ENCODE measurements at regions of chr12 and their contacts with region 1.

Region 1: DNA sequence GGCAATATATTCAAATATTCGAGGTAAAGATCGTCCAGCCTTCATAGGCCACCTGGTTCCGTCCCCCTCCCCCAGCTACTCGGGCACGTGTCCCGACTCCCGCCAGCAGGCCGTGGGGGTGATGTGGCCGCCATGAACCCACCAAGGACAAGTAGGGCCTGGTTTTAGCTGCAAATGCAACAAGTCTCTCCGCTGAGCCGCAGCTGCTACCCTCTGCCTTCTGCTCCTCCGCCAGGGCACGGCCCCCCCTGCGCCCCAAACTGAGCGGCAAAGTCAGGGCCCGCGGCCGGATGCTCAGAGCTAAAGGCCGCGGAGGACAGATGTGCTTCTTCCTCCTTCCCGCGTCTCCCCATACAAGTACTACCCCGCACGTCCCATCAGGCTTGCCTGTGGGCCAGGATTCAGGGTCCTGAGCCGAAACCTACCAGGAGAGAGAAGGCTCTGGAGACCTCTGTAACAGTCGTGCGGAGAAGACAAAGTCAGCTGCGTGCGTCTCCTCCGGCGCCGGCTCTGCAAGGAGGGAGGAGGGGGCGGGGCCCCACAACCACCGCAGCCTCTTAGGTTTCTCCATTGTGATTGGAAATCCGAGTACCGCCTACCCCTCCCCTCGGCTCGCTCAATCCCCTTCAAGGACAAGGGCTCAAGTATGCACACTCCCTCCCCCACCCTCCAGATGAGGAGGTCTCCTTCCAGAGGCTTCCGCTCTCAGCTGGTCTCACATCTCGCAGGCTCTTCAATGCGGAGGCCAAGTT is at the start of gene LDHB:
- DNase-seq: peak; percentile 85
- ATAC-seq: peak; percentile 96
- H3K4me3 ChIP-seq: peak within 1 kb of the TSS; percentile 81 to 94 (median 88)
- H3K4me3 Mint-ChIP-seq: peak within 1 kb of the TSS; percentile 93
- H3K27ac ChIP-seq: peak within 1 kb of the TSS; percentile 61 to 68
- H3K27ac Mint-ChIP-seq: peak within 1 kb of the TSS; percentile 97
- H3K4me1 ChIP-seq: peaks cover 8 to 13% of the 10 kb centered on the region in 2 donors
- H3K4me1 Mint-ChIP-seq: peaks cover 30% of the 10 kb centered on the region
- H3K27me3 ChIP-seq: peaks cover 0 to 2% (median 0%) of the 10 kb centered on the region in 4 experiments
- H3K27me3 Mint-ChIP-seq: peaks cover 11% of the 10 kb centered on the region
- CTCF ChIP-seq: no peak
- total RNA-seq, gene LDHB: 161 and 163 TPM in 2 replicates

Region 2: GRCh38 chr12:21501379-21501956 is 156.0 kb before region 1 on chr12 and contains the starts of genes GOLT1B and RECQL:
- CTCF ChIA-PET with region 1: no interaction called
- POLR2A ChIA-PET with region 1: no interaction called
- intact Hi-C with region 1: loop called (anchors 1 kb)
- DNase-seq: peak; percentile 96
- ATAC-seq: peak; percentile 95
- H3K4me3 ChIP-seq: peak within 1 kb of the TSS; percentile 69 to 97 (median 92)
- H3K4me3 Mint-ChIP-seq: no peak within 1 kb of the TSS
- H3K27ac ChIP-seq: peak within 1 kb of the TSS; percentile 70 to 89
- H3K27ac Mint-ChIP-seq: no peak within 1 kb of the TSS
- H3K4me1 ChIP-seq: peaks cover 26 to 28% of the 10 kb centered on the region in 2 donors
- H3K4me1 Mint-ChIP-seq: peaks cover 37% of the 10 kb centered on the region
- H3K27me3 ChIP-seq: no peaks in the 10 kb centered on the region
- H3K27me3 Mint-ChIP-seq: no peaks in the 10 kb centered on the region
- CTCF ChIP-seq: no peak
- total RNA-seq, gene GOLT1B: 25.1 and 26.3 TPM in 2 replicates
- total RNA-seq, gene RECQL: 54.8 and 56.3 TPM in 2 replicates

Region 3: GRCh38 chr12:21527451-21528180 is 129.9 kb before region 1 on chr12:
- CTCF ChIA-PET with region 1: no interaction called
- POLR2A ChIA-PET with region 1: interaction called, 3 read pairs
- intact Hi-C with region 1: loop called (anchors 5 kb)
- DNase-seq: peak; percentile 78
- ATAC-seq: peak; percentile 98
- H3K4me3 ChIP-seq: peak overlapping the region; percentile 38 to 70 (median 61)
- H3K4me3 Mint-ChIP-seq: peak overlapping the region; percentile 82
- H3K27ac ChIP-seq: no peak overlapping the region
- H3K27ac Mint-ChIP-seq: peak overlapping the region; percentile 54
- H3K4me1 ChIP-seq: peaks cover 6 to 9% of the 10 kb centered on the region in 2 donors
- H3K4me1 Mint-ChIP-seq: peaks cover 12% of the 10 kb centered on the region
- H3K27me3 ChIP-seq: peaks cover 0 to 14% (median 9%) of the 10 kb centered on the region in 4 experiments
- H3K27me3 Mint-ChIP-seq: peaks cover 23% of the 10 kb centered on the region
- CTCF ChIP-seq: no peak

Region 4: DNA sequence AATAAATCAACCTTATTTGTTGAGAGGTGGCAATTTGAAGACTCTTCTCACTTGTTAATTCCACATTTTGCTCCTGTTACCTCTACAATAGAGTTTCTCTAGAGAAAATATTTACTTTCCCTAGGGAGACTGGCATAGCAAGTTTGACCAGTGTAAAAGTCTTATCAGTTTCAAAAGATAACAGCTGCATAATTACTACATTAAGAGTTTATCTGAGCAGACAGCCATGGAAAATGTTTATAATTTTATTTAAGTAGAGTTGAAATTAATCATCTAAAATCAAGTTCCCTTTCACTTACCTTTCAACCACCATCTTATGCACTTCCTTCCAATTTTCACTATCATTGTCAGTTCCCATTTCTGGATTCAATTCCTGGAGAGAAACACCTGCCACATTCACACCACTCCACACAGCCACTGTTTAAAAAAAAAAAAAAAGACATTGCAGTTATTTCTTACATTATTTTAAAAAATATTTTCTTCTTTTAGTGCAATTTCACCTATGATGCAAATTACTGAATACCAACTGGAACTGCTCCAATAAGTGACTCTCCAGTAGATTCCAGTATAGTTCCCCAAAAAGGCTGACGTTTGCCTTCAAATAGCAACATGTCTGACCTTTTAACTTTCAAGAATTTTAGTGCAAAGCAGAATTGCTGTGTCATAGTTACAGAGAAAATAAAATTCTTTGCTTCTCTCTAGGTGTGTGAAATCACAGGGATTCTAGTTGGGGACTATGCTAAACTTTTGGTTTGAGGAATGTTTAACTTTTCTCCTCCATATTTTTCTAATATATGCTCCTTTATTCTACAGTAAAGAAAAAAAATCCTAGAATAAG is 19.2 kb before region 1 on chr12:
- CTCF ChIA-PET with region 1: no interaction called
- POLR2A ChIA-PET with region 1: no interaction called
- intact Hi-C with region 1: loop called (anchors 2 kb)
- DNase-seq: no peak
- ATAC-seq: no peak
- H3K4me3 ChIP-seq: no peak overlapping the region
- H3K4me3 Mint-ChIP-seq: no peak overlapping the region
- H3K27ac ChIP-seq: no peak overlapping the region
- H3K27ac Mint-ChIP-seq: no peak overlapping the region
- H3K4me1 ChIP-seq: no peaks in the 10 kb centered on the region
- H3K4me1 Mint-ChIP-seq: no peaks in the 10 kb centered on the region
- H3K27me3 ChIP-seq: no peaks in the 10 kb centered on the region
- H3K27me3 Mint-ChIP-seq: no peaks in the 10 kb centered on the region
- CTCF ChIP-seq: no peak

Region 5: DNA sequence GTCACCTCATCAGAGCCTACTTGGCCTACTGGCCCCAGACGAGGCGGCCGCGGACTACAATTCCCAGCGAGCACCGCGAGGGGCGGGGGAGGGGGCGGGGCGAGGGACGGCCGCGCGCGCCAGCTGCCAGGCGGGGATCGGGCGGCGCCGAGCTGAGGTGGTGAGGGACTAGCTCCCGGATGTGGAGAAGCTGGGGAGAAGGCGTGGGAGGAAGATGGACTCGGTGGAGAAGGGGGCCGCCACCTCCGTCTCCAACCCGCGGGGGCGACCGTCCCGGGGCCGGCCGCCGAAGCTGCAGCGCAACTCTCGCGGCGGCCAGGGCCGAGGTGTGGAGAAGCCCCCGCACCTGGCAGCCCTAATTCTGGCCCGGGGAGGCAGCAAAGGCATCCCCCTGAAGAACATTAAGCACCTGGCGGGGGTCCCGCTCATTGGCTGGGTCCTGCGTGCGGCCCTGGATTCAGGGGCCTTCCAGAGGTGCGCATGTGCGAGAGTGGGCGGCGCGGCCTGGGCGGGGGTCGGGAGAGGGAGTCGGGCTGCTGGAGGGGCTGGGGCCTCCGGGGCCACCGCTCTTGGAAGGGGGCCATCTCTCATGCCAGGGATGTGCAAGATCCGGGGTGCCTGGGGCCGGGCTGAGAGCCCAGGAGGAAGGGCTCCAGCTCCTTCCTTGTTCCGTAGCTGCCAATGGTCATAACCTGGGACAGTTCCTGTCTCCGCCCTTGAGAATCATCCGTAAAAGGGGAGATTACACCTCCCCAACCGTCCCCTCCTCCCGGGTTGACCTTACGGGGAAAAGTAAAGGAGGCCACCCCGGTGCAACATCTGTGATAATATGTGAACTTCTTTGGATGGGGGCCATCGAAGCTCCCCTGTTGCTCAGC is 388.8 kb after region 1 on chr12 and contains the start of gene CMAS:
- CTCF ChIA-PET with region 1: no interaction called
- POLR2A ChIA-PET with region 1: no interaction called
- intact Hi-C with region 1: loop called (anchors 2 kb)
- DNase-seq: peak; percentile 77
- ATAC-seq: peak; percentile 89
- H3K4me3 ChIP-seq: peak within 1 kb of the TSS; percentile 48 to 95 (median 93)
- H3K4me3 Mint-ChIP-seq: peak within 1 kb of the TSS; percentile 95
- H3K27ac ChIP-seq: peak within 1 kb of the TSS; percentile 13 to 69
- H3K27ac Mint-ChIP-seq: peak within 1 kb of the TSS; percentile 81
- H3K4me1 ChIP-seq: peaks cover 5 to 6% of the 10 kb centered on the region in 2 donors
- H3K4me1 Mint-ChIP-seq: peaks cover 23% of the 10 kb centered on the region
- H3K27me3 ChIP-seq: no peaks in the 10 kb centered on the region
- H3K27me3 Mint-ChIP-seq: peaks cover 9% of the 10 kb centered on the region
- CTCF ChIP-seq: no peak
- total RNA-seq, gene CMAS: 16.1 and 19.1 TPM in 2 replicates